IMR-90 (cell line): ENCODE measurements at regions of chr2 and their contacts with region 1.

Region 1: GRCh38 chr2:238169708-238170251 is 11.0 kb downstream of the ERFE start:
- DNase-seq: peak; percentile 98
- ATAC-seq: peak; percentile 80
- H3K4me3 ChIP-seq: no peak overlapping the region
- H3K27ac ChIP-seq: peak overlapping the region; percentile 97
- H3K4me1 ChIP-seq: peaks cover 31% of the 10 kb centered on the region
- H3K27me3 ChIP-seq: no peaks in the 10 kb centered on the region
- CTCF ChIP-seq: no peak
- POLR2A ChIP-seq: peak; percentile 88; the same call in 1 of the 2 replicates
- RAD21 ChIP-seq: peak; percentile 22; the same call in 1 of the 2 replicates

Region 2: GRCh38 chr2:237931205-237931721 is 238.5 kb before region 1 on chr2:
- CTCF ChIA-PET with region 1: no interaction called
- POLR2A ChIA-PET with region 1: no interaction called
- dilution Hi-C with region 1: no loop called
- in situ Hi-C with region 1: no loop called
- intact Hi-C with region 1: no loop called
- DNase-seq: peak; percentile 92
- ATAC-seq: peak; percentile 80
- H3K4me3 ChIP-seq: no peak overlapping the region
- H3K27ac ChIP-seq: peak overlapping the region; percentile 71; the same call in 1 of the 2 replicates
- H3K4me1 ChIP-seq: peaks cover 20% of the 10 kb centered on the region
- H3K27me3 ChIP-seq: no peaks in the 10 kb centered on the region
- CTCF ChIP-seq: no peak
- POLR2A ChIP-seq: no peak
- RAD21 ChIP-seq: no peak

Region 3: DNA sequence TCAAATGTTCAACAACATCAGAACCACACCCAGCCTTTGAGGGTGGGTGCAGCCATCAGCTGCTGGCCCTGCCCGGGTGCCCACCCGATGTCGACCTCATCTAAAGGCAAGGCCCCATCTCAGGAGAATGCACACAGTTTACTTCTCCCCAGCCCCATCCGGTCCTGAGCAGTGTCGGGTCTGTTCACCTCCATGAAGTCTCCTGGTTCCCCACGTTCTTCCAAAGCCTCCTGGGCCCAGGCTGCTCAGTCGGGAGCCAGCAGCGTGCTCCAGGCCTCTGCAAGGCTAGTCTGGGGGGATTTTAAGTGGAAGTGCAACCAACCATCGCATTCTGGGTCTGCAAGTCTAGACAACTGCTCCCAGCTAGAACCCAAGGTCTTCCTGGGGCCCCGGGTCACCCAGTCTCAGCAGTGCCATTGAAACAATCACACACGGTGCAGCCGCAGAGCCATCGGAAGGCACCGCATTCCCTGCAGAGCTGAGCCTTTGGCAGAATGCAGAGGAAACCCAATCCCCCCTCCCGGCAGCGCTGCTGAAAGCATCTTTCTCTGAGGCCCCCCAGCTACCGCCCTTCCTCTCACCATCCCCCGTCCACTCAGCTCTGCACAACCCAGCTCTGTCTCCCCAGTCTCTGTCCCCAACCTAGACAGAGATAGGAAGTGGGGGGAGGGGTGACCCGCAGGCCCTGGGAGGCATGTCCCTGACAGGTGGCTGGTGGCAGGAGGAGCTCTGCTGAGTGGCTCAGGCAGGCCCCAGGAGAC is 61.2 kb before region 1 on chr2:
- CTCF ChIA-PET with region 1: no interaction called
- POLR2A ChIA-PET with region 1: no interaction called
- dilution Hi-C with region 1: no loop called
- in situ Hi-C with region 1: no loop called
- intact Hi-C with region 1: no loop called
- DNase-seq: no peak
- ATAC-seq: peak; percentile 17; the same call in 1 of the 2 replicates
- H3K4me3 ChIP-seq: no peak overlapping the region
- H3K27ac ChIP-seq: no peak overlapping the region
- H3K4me1 ChIP-seq: no peaks in the 10 kb centered on the region
- H3K27me3 ChIP-seq: no peaks in the 10 kb centered on the region; the same call in 1 of the 2 replicates
- CTCF ChIP-seq: no peak
- POLR2A ChIP-seq: no peak
- RAD21 ChIP-seq: no peak

Region 4: GRCh38 chr2:238239872-238240751 is 70.3 kb after region 1 on chr2 and contains the start of gene HES6:
- CTCF ChIA-PET with region 1: no interaction called
- POLR2A ChIA-PET with region 1: no interaction called
- dilution Hi-C with region 1: no loop called
- in situ Hi-C with region 1: no loop called
- intact Hi-C with region 1: loop called (anchors 1 kb)
- DNase-seq: peak; percentile 82
- ATAC-seq: peak; percentile 97
- H3K4me3 ChIP-seq: peak within 1 kb of the TSS; percentile 60
- H3K27ac ChIP-seq: no peak within 1 kb of the TSS; the same call in 1 of the 2 replicates
- H3K4me1 ChIP-seq: peaks cover 2% of the 10 kb centered on the region; the same call in 1 of the 2 replicates
- H3K27me3 ChIP-seq: peaks cover 17% of the 10 kb centered on the region
- CTCF ChIP-seq: peak; percentile 14; the same call in 1 of the 2 replicates
- POLR2A ChIP-seq: peak; percentile 95
- RAD21 ChIP-seq: no peak
- total RNA-seq, gene HES6: 1.3 and 1.4 TPM in 2 replicates